ENCODE measurements at regions of chr5 and their contacts with region 1.

Region 1: DNA sequence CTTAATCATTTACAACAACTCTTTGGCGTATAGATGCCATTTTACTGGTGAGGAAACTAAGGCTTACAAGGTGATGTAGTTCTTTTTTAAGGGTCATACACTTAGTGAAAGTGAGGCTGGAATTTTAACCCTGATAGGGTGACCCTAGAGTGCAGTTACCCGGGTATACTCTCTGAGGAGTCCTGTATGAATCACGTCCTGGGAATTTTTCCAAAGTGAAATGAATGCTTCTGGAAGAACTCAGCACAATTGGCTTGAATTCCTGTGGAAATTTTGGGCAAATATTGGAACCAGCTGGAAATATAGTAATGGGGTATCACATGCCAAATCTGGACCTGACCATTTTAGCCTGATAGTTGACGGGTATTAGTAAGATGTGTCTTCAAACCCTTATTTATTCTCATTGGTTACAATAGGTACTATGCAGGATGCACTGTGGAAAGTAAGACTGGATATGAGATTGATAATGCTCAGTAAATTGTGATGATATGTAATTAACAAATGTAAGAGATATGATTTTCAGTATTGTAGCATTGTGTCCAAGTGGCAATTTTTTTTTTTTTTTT is 14.8 kb downstream of the SUB1 start:
- DNase-seq: no peak
- ATAC-seq: no peak
- H3K4me3 ChIP-seq: no peak overlapping the region
- H3K27ac ChIP-seq: no peak overlapping the region
- H3K4me1 ChIP-seq: peaks cover 32% of the 10 kb centered on the region
- H3K27me3 ChIP-seq: no peaks in the 10 kb centered on the region
- CTCF ChIP-seq: no peak

Region 2: GRCh38 chr5:32100230-32100629 is 499.9 kb before region 1 on chr5:
- intact Hi-C with region 1: loop called (anchors 10 kb)
- DNase-seq: no peak
- ATAC-seq: no peak
- H3K4me3 ChIP-seq: no peak overlapping the region
- H3K27ac ChIP-seq: peak overlapping the region; percentile 49
- H3K4me1 ChIP-seq: peaks cover 5% of the 10 kb centered on the region
- H3K27me3 ChIP-seq: no peaks in the 10 kb centered on the region
- CTCF ChIP-seq: no peak

Measured in upper lobe of right lung (tissue), 1 donor.